CD14-positive monocyte (primary cell): ENCODE measurements at regions of chr2 and their contacts with region 1.

Region 1: GRCh38 chr2:46296840-46297545 is at the start of gene EPAS1:
- DNase-seq: peak; percentile 69 to 76 (median 74)
- H3K4me3 ChIP-seq: peak within 1 kb of the TSS; percentile 67 to 90 (median 72)
- H3K4me3 Mint-ChIP-seq: peak within 1 kb of the TSS; percentile 88 to 98
- H3K27ac ChIP-seq: peak within 1 kb of the TSS in 1 of 2 donors; percentile 70
- H3K27ac Mint-ChIP-seq: peak within 1 kb of the TSS; percentile 13 to 86 (median 80)
- H3K4me1 ChIP-seq: peaks cover 32 to 41% of the 10 kb centered on the region in 2 donors
- H3K4me1 Mint-ChIP-seq: peaks cover 38% of the 10 kb centered on the region
- H3K27me3 ChIP-seq: peaks cover 27 to 61% of the 10 kb centered on the region in 2 donors
- H3K27me3 Mint-ChIP-seq: peaks cover 61 to 74% (median 70%) of the 10 kb centered on the region in 3 donors
- CTCF ChIP-seq: no peak
- polyA plus RNA-seq, gene EPAS1: 0.11 to 1.0 (median 0.88) TPM

Region 2: GRCh38 chr2:45681675-45682074 is 615.3 kb before region 1 on chr2:
- intact Hi-C with region 1: no loop called
- DNase-seq: peak; percentile 18 to 51 (median 43)
- H3K4me3 ChIP-seq: no peak overlapping the region
- H3K4me3 Mint-ChIP-seq: peak overlapping the region in 1 of 2 donors; percentile 35
- H3K27ac ChIP-seq: no peak overlapping the region
- H3K27ac Mint-ChIP-seq: peak overlapping the region in 2 of 7 donors; percentile 8 to 45
- H3K4me1 ChIP-seq: no peaks in the 10 kb centered on the region
- H3K4me1 Mint-ChIP-seq: peaks cover 4% of the 10 kb centered on the region
- H3K27me3 ChIP-seq: no peaks in the 10 kb centered on the region
- H3K27me3 Mint-ChIP-seq: peaks cover 0 to 2% (median 0%) of the 10 kb centered on the region in 3 donors
- CTCF ChIP-seq: no peak

Region 3: DNA sequence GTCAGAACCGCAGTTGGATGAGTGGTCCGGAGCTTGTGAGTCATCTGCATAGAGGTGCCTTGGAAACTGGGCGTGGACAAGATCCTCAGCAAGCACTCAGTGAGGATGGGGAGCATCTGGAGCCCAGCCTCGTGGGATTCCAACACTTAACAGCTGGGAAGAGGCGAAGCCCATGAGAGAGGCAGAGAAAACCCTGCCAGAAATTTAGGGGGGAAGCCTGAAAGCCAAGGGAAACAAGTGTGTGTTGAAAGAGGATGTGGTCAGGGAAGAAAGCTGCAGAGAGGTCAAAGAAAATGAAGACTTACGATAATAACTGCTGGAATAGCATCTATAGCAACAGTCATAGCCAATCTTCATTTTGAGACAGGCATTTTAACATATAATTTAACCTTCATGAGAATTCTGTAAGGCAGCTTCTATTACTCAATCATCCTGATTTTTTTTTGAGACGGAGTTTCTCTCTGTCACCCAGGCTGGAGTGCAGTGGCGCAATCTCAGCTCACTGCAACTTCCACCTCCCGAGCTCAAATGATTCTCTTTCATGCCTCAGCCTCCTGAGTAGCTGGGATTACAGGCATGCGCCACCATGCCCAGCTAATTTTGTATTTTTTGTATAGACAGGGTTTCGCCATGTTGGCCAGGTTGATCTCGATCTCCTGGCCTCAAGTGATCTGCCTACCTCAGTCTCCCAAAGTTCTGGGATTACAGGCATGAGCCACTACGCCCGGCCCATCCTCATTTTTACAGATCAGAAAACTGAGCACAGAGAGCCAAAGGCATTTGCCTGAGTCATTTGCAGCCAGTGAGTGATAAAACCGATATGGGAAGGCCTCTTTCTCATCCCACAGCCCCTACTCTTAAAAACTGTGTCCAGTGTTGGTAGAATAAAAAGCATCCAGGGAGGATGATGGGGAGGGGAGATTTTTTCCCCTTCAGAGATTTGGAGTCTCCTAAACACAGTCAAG is 214.2 kb before region 1 on chr2:
- intact Hi-C with region 1: loop called in 1 of 2 experiments (anchors 10 kb)
- DNase-seq: peak; percentile 39 to 51 (median 45)
- H3K4me3 ChIP-seq: peak overlapping the region in 2 of 3 experiments; percentile 12 to 31
- H3K4me3 Mint-ChIP-seq: peak overlapping the region; percentile 52 to 77
- H3K27ac ChIP-seq: peak overlapping the region; percentile 38 to 79
- H3K27ac Mint-ChIP-seq: peak overlapping the region; percentile 10 to 87 (median 75)
- H3K4me1 ChIP-seq: peaks cover 28 to 34% of the 10 kb centered on the region in 2 donors
- H3K4me1 Mint-ChIP-seq: peaks cover 43% of the 10 kb centered on the region
- H3K27me3 ChIP-seq: no peaks in the 10 kb centered on the region
- H3K27me3 Mint-ChIP-seq: peaks cover 0 to 5% (median 2%) of the 10 kb centered on the region in 3 donors
- CTCF ChIP-seq: no peak

Region 4: GRCh38 chr2:46230115-46230571 is 66.8 kb before region 1 on chr2:
- intact Hi-C with region 1: loop called in 1 of 2 experiments (anchors 5 kb)
- DNase-seq: peak in 2 of 3 donors; percentile 24 to 33
- H3K4me3 ChIP-seq: no peak overlapping the region
- H3K4me3 Mint-ChIP-seq: no peak overlapping the region
- H3K27ac ChIP-seq: no peak overlapping the region
- H3K27ac Mint-ChIP-seq: peak overlapping the region in 3 of 7 donors; percentile 30 to 33 (median 31)
- H3K4me1 ChIP-seq: peaks cover 12 to 19% of the 10 kb centered on the region in 2 donors
- H3K4me1 Mint-ChIP-seq: peaks cover 16% of the 10 kb centered on the region
- H3K27me3 ChIP-seq: peaks cover 3 to 14% of the 10 kb centered on the region in 2 donors
- H3K27me3 Mint-ChIP-seq: peaks cover 18 to 36% (median 26%) of the 10 kb centered on the region in 3 donors
- CTCF ChIP-seq: peak; percentile 15